ENCODE measurements at regions of chr12 and their contacts with region 1.

Region 1: GRCh38 chr12:6937481-6938297 is 5.9 kb upstream of the RNU7-1 start:
- DNase-seq: peak; percentile 81 to 96 (median 93)
- ATAC-seq: peak; percentile 97
- H3K4me3 ChIP-seq: peak overlapping the region; percentile 90
- H3K4me3 Mint-ChIP-seq: peak overlapping the region; percentile 75 to 88 (median 84)
- H3K27ac ChIP-seq: peak overlapping the region; percentile 92
- H3K27ac Mint-ChIP-seq: peak overlapping the region; percentile 91 to 99 (median 96)
- H3K4me1 ChIP-seq: peaks cover 5 to 29% of the 10 kb centered on the region in 2 donors
- H3K4me1 Mint-ChIP-seq: peaks cover 41 to 67% (median 51%) of the 10 kb centered on the region in 7 donors
- H3K27me3 ChIP-seq: no peaks in the 10 kb centered on the region
- H3K27me3 Mint-ChIP-seq: no peaks in the 10 kb centered on the region

Region 2: DNA sequence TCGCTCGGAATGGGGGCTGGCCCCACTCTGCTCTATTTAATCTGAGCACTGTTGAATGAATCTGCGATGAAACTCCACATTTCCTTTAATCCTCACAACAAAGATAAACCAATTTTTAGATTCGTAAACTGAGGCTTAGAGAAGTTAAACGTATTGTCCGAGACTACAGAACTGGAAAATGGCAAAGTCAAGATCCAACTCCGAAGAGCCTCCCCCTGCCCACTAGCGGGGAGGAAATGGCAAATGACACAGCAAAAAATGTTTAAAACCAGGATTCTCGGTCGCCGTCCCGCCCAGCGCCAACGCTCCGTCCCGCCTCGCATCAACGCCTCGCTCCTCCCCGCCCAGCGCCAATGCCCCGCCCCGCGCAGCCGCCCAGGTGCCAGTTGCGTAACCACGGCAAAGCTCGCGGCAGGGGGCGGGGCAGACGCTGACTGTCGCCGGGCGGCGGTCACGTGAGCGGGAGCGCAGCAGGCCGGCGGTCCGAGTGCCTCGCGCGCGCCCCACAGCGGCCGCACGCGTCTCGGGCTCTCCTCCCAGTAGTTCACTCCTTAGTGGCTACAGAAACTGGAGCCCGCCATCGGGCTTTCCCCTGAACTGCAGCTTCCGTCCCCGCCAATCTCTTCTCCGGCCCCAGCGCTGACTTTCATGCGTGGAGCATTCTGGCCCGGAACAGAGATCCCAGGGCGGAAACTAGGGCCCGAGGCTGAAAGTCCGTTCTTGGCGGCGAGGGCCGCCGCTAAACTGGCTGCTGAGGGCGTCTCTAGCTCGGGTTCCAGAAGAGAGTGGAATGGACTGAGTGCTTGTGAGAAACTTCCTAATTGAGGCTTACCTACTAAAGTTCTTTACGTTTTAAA is 46.7 kb before region 1 on chr12:
- CTCF ChIA-PET with region 1: interaction called, 3 read pairs
- POLR2A ChIA-PET with region 1: interaction called, 24 read pairs
- intact Hi-C with region 1: loop called (anchors 1 kb)
- DNase-seq: peak; percentile 95 to 100 (median 97)
- ATAC-seq: peak; percentile 96
- H3K4me3 ChIP-seq: peak overlapping the region; percentile 93
- H3K4me3 Mint-ChIP-seq: peak overlapping the region; percentile 78 to 86 (median 84)
- H3K27ac ChIP-seq: peak overlapping the region; percentile 86
- H3K27ac Mint-ChIP-seq: peak overlapping the region; percentile 82 to 94 (median 90)
- H3K4me1 ChIP-seq: peaks cover 6 to 10% of the 10 kb centered on the region in 2 donors
- H3K4me1 Mint-ChIP-seq: peaks cover 0 to 31% (median 11%) of the 10 kb centered on the region in 7 donors
- H3K27me3 ChIP-seq: no peaks in the 10 kb centered on the region
- H3K27me3 Mint-ChIP-seq: no peaks in the 10 kb centered on the region

Region 3: DNA sequence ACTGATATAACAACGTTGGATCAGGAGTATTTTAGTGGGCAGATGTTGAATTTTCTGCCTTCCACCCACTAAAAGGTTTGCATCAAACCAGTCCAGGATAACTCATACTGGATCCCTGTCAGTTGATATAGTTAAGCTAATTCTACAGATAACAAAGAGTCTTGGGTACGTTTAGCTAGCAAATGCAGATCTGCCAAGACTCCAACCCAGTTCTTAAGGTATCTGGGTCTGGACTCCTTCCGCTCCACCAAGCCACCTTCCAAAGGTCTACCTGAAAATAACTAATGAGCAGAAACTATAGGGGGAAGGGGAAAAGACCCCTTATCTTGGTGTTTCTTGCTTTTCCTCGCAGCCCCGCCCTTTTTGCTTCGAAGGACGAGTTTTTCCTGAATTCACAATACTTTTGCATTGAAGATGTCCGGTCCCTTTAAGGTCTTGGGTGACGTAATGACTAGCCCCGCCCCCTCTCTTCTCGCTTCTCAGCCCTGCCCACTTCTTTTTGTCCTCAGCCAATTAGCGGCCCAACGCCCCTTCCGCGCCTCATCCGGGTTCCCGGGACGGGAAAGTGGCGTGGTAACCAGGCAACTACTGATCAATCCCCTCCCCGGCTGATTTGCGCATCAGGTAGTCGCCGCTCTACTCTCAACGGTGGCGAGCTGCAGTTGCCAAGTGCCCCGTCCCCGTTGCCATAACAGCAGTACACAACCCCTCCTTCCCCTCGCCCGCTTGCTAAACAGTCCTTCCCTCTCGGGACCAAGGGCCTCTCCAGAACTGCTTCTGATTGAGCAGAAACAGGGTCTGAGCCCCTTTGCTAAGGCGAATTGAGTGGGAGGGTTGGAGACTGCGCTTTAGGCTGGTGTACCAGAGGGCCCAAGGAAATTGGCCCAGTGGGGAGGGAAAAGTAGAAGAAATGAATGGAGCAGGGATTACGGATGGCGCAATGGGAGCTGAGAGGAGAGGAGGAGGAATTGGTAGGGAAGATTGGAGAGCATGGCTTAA is 33.1 kb before region 1 on chr12 and contains the start of gene LRRC23:
- CTCF ChIA-PET with region 1: interaction called, 3 read pairs
- POLR2A ChIA-PET with region 1: interaction called, 5 read pairs
- intact Hi-C with region 1: loop called in 1 of 2 experiments (anchors 1 kb)
- DNase-seq: peak; percentile 89 to 98 (median 95)
- ATAC-seq: peak; percentile 98
- H3K4me3 ChIP-seq: peak within 1 kb of the TSS; percentile 75
- H3K4me3 Mint-ChIP-seq: peak within 1 kb of the TSS in 1 of 10 donors; percentile 8
- H3K27ac ChIP-seq: peak within 1 kb of the TSS; percentile 93
- H3K27ac Mint-ChIP-seq: peak within 1 kb of the TSS in 1 of 9 donors; percentile 78
- H3K4me1 ChIP-seq: peaks cover 14 to 17% of the 10 kb centered on the region in 2 donors
- H3K4me1 Mint-ChIP-seq: peaks cover 0 to 10% (median 3%) of the 10 kb centered on the region in 7 donors
- H3K27me3 ChIP-seq: no peaks in the 10 kb centered on the region
- H3K27me3 Mint-ChIP-seq: no peaks in the 10 kb centered on the region
- total RNA-seq, gene LRRC23: 6.6 to 12.1 (median 7.3) TPM

Region 4: DNA sequence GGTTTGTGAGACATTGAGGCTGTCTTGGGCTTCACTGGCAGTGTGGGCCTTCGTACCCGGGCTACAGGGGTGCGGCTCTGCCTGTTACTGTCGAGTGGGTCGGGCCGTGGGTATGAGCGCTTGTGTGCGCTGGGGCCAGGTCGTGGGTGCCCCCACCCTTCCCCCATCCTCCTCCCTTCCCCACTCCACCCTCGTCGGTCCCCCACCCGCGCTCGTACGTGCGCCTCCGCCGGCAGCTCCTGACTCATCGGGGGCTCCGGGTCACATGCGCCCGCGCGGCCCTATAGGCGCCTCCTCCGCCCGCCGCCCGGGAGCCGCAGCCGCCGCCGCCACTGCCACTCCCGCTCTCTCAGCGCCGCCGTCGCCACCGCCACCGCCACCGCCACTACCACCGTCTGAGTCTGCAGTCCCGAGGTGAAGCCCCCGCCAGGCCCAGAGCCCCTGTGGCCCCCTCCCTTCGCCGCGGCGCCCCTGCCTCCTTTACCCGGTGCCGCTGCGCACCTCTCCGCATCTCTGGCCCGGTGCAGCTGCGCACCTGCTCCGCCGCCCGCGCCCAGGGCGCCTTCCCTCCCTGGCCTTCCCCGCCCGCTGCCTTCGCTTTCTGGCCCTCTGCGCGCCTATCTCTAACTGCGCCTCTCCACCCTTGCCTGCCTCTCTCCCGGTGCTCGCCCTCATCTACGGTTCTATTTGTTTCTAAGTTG is 23.3 kb before region 1 on chr12 and contains the start of gene ENO2:
- CTCF ChIA-PET with region 1: no interaction called
- POLR2A ChIA-PET with region 1: interaction called, 367 read pairs
- intact Hi-C with region 1: loop called (anchors 1 kb)
- DNase-seq: peak; percentile 68 to 90 (median 81)
- ATAC-seq: peak; percentile 96
- H3K4me3 ChIP-seq: peak within 1 kb of the TSS; percentile 79
- H3K4me3 Mint-ChIP-seq: peak within 1 kb of the TSS; percentile 88 to 100 (median 96)
- H3K27ac ChIP-seq: peak within 1 kb of the TSS; percentile 86
- H3K27ac Mint-ChIP-seq: peak within 1 kb of the TSS; percentile 86 to 99 (median 93)
- H3K4me1 ChIP-seq: peaks cover 11 to 14% of the 10 kb centered on the region in 2 donors
- H3K4me1 Mint-ChIP-seq: peaks cover 0 to 53% (median 36%) of the 10 kb centered on the region in 7 donors
- H3K27me3 ChIP-seq: no peaks in the 10 kb centered on the region
- H3K27me3 Mint-ChIP-seq: peaks cover 0 to 4% (median 0%) of the 10 kb centered on the region in 5 donors
- total RNA-seq, gene ENO2: 65.3 to 193 (median 178) TPM

Region 5: DNA sequence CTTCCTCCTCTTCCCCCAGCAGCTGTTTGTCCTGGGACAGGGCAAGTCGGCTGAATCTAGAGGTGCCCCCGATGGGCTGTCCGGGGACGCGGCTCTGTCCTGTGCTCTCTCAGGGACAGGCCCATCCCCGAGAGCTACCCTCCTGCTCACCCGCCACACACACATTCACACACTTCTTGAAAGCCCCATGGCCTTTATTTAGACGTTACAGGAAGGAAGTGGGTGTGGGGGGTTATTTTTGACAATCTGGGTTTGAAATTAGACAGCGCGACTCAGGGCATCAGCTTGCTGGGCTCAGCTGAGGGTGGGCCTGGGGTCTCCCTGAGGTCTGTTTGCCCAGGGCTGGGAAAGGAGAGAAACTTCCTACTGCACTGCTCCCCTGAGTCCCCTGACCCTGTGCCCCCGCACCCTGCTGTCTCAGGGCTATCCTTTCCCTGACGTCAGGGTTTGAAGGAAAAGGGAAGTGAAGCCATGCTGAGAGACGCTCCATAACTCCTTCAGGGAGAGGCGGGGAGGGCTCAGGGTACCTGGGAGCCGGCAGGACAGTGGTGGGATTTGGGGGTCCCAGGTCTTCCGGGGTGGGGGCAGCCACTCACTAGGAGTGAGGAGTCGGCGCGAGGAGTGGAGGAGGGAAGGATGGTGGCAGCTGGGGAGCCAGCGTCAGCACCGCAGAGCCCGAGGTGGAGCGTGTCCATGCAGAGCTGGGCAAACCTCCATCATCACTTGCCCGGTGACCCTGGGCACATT is 21.5 kb after region 1 on chr12:
- CTCF ChIA-PET with region 1: interaction called, 460 read pairs
- POLR2A ChIA-PET with region 1: interaction called, 1,270 read pairs
- intact Hi-C with region 1: no loop called
- DNase-seq: peak; percentile 55 to 86 (median 82)
- ATAC-seq: peak; percentile 73
- H3K4me3 ChIP-seq: peak overlapping the region; percentile 65
- H3K4me3 Mint-ChIP-seq: peak overlapping the region; percentile 89 to 99 (median 93)
- H3K27ac ChIP-seq: peak overlapping the region; percentile 95
- H3K27ac Mint-ChIP-seq: peak overlapping the region; percentile 96 to 100 (median 99)
- H3K4me1 ChIP-seq: peaks cover 84 to 91% of the 10 kb centered on the region in 2 donors
- H3K4me1 Mint-ChIP-seq: peaks cover 58 to 86% (median 77%) of the 10 kb centered on the region in 7 donors
- H3K27me3 ChIP-seq: no peaks in the 10 kb centered on the region
- H3K27me3 Mint-ChIP-seq: no peaks in the 10 kb centered on the region

Region 6: GRCh38 chr12:7042842-7043241 is 105.2 kb after region 1 on chr12:
- CTCF ChIA-PET with region 1: no interaction called
- POLR2A ChIA-PET with region 1: no interaction called
- intact Hi-C with region 1: no loop called
- DNase-seq: peak in 4 of 9 donors; percentile 5 to 12 (median 11)
- ATAC-seq: peak; percentile 40
- H3K4me3 ChIP-seq: no peak overlapping the region
- H3K4me3 Mint-ChIP-seq: no peak overlapping the region
- H3K27ac ChIP-seq: no peak overlapping the region
- H3K27ac Mint-ChIP-seq: no peak overlapping the region
- H3K4me1 ChIP-seq: no peaks in the 10 kb centered on the region
- H3K4me1 Mint-ChIP-seq: peaks cover 0 to 19% (median 15%) of the 10 kb centered on the region in 7 donors
- H3K27me3 ChIP-seq: no peaks in the 10 kb centered on the region
- H3K27me3 Mint-ChIP-seq: peaks cover 0 to 5% (median 0%) of the 10 kb centered on the region in 5 donors

Region 7: GRCh38 chr12:7108796-7109571 is 171.3 kb after region 1 on chr12 and contains the start of gene C1RL:
- CTCF ChIA-PET with region 1: interaction called, 50 read pairs
- POLR2A ChIA-PET with region 1: interaction called, 38 read pairs
- intact Hi-C with region 1: no loop called
- DNase-seq: peak; percentile 50 to 88 (median 65)
- ATAC-seq: peak; percentile 69
- H3K4me3 ChIP-seq: peak within 1 kb of the TSS; percentile 95
- H3K4me3 Mint-ChIP-seq: peak within 1 kb of the TSS; percentile 90 to 98 (median 94)
- H3K27ac ChIP-seq: peak within 1 kb of the TSS; percentile 79
- H3K27ac Mint-ChIP-seq: peak within 1 kb of the TSS; percentile 84 to 95 (median 93)
- H3K4me1 ChIP-seq: peaks cover 6% of the 10 kb centered on the region in 2 donors
- H3K4me1 Mint-ChIP-seq: peaks cover 29 to 64% (median 43%) of the 10 kb centered on the region in 7 donors
- H3K27me3 ChIP-seq: no peaks in the 10 kb centered on the region
- H3K27me3 Mint-ChIP-seq: no peaks in the 10 kb centered on the region
- total RNA-seq, gene C1RL: 18.5 to 38.6 (median 24.4) TPM

Measured in naive thymus-derived CD4-positive, alpha-beta T cell (primary cell).